CD14-positive monocyte (primary cell): ENCODE measurements at regions of chr7 and their contacts with region 1.

Region 1: DNA sequence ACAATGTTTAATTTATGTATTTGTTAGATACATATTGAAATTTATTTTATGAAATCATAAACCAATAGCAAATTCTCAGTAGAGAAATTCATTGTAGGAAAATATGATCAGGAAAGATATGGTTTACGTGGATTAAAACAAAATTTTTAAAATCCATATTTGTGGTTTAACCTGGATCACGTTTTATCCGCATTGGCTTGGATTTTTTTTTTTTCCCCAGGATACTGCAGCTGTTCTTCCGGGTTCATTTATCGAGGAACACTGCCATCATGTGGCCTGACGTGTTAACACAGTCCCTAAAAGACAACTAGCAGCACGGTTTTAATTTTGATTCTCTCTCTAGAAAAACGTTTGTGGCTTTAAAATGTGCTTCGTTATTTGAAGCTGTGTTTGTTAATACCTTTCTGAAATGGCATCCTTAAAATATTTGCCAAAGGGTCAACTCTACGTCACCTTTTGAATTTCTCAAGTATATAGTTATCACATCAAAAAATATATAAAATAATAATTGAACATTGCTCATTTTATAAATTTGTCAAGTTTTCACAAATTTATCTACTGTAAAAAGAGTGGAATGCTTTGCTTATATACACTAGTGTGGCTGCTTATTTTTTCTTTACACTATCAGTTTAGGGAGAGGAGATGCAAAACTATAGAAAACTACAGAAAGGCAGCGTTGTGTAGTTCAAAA is 8.7 kb upstream of the ASB4 start:
- DNase-seq: peak; percentile 26 to 54 (median 49)
- H3K4me3 ChIP-seq: no peak overlapping the region
- H3K4me3 Mint-ChIP-seq: no peak overlapping the region
- H3K27ac ChIP-seq: no peak overlapping the region
- H3K27ac Mint-ChIP-seq: no peak overlapping the region
- H3K4me1 ChIP-seq: no peaks in the 10 kb centered on the region
- H3K4me1 Mint-ChIP-seq: no peaks in the 10 kb centered on the region
- H3K27me3 ChIP-seq: no peaks in the 10 kb centered on the region
- H3K27me3 Mint-ChIP-seq: peaks cover 0 to 2% (median 1%) of the 10 kb centered on the region in 3 donors
- CTCF ChIP-seq: peak; percentile 85

Region 2: GRCh38 chr7:94449148-94449725 is 1027.8 kb before region 1 on chr7:
- intact Hi-C with region 1: loop called in 1 of 2 experiments (anchors 10 kb)
- DNase-seq: no peak
- H3K4me3 ChIP-seq: no peak overlapping the region
- H3K4me3 Mint-ChIP-seq: no peak overlapping the region
- H3K27ac ChIP-seq: no peak overlapping the region
- H3K27ac Mint-ChIP-seq: no peak overlapping the region
- H3K4me1 ChIP-seq: peaks cover 3 to 8% of the 10 kb centered on the region in 2 donors
- H3K4me1 Mint-ChIP-seq: peaks cover 6% of the 10 kb centered on the region
- H3K27me3 ChIP-seq: peaks cover 0 to under 1% of the 10 kb centered on the region in 2 donors
- H3K27me3 Mint-ChIP-seq: peaks cover 0 to 3% (median 0%) of the 10 kb centered on the region in 3 donors
- CTCF ChIP-seq: peak; percentile 26